ENCODE measurements at regions of chr2 and their contacts with region 1.

Region 1: GRCh38 chr2:55487686-55488085 is 31.8 kb upstream of the CFAP36 start:
- DNase-seq: no peak
- H3K4me3 ChIP-seq: no peak overlapping the region
- H3K27ac ChIP-seq: no peak overlapping the region
- H3K4me1 ChIP-seq: no peaks in the 10 kb centered on the region
- CTCF ChIP-seq: no peak

Region 2: GRCh38 chr2:55296393-55296792 is 191.3 kb before region 1 on chr2:
- CTCF ChIA-PET with region 1: no interaction called
- POLR2A ChIA-PET with region 1: no interaction called
- intact Hi-C with region 1: no loop called
- DNase-seq: no peak
- H3K4me3 ChIP-seq: no peak overlapping the region
- H3K27ac ChIP-seq: no peak overlapping the region
- H3K4me1 ChIP-seq: no peaks in the 10 kb centered on the region
- CTCF ChIP-seq: no peak

Region 3: GRCh38 chr2:55500025-55500424 is 12.3 kb after region 1 on chr2:
- CTCF ChIA-PET with region 1: no interaction called
- POLR2A ChIA-PET with region 1: interaction called, 10 read pairs
- intact Hi-C with region 1: no loop called
- DNase-seq: no peak
- H3K4me3 ChIP-seq: no peak overlapping the region
- H3K27ac ChIP-seq: no peak overlapping the region
- H3K4me1 ChIP-seq: no peaks in the 10 kb centered on the region
- CTCF ChIP-seq: no peak

Region 4: GRCh38 chr2:55653251-55653650 is 165.6 kb after region 1 on chr2:
- CTCF ChIA-PET with region 1: no interaction called
- POLR2A ChIA-PET with region 1: no interaction called
- intact Hi-C with region 1: no loop called
- DNase-seq: no peak
- H3K4me3 ChIP-seq: no peak overlapping the region
- H3K27ac ChIP-seq: no peak overlapping the region
- H3K4me1 ChIP-seq: no peaks in the 10 kb centered on the region
- CTCF ChIP-seq: no peak